Astrocyte of the cerebellum (primary cell): ENCODE measurements at regions of chr9 and their contacts with region 1.

Region 1: GRCh38 chr9:71630377-71630995 is 137.8 kb downstream of the CEMIP2 start:
- DNase-seq: no peak
- H3K4me3 ChIP-seq: no peak overlapping the region
- CTCF ChIP-seq: no peak

Region 2: DNA sequence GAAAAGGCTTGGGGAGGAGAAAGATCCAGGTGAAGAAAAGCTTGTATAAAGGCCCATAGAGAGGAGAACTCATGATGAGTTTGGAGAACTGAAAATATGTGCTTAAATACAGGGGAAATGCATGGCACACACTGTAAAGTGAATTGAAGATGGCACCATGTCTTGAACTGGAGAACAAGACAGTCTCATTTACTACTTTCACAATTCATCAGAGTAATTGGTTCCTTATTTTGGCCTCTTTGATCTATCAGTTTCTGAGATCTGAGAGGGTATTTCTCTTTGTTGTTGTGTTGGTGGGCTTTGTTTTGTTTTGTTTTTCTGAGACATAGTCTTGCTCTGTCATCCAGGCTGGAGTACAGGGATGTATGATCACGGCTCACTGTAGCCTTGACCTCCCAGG is 39.6 kb after region 1 on chr9:
- in situ Hi-C with region 1: loop called (anchors 5 kb)
- DNase-seq: no peak
- H3K4me3 ChIP-seq: no peak overlapping the region
- CTCF ChIP-seq: no peak